GM10248 (cell line): ENCODE measurements at regions of chr10 and their contacts with region 1.

Region 1: DNA sequence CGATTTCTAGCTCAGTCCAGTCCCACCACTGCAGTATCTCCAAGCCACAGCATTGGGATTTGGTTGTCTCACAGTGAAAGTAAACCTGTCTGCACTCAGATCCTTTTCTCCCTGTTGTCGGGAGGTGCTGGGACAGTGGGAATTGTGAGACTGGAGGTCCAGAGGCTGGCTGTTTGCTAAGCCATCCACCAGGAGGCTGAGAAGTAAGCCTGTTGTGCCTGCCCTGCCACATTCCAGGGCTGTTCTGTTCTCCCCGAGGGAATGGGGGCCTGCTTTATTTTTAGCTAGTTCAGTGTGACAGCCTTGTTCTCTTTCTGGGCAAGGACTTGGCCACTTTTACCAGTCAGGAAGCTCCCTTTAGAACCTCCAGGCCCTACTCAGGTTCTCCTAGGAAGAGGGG is 54.9 kb downstream of the HK1 start:
- DNase-seq: no peak
- CTCF ChIP-seq: no peak

Region 2: GRCh38 chr10:69285699-69286098 is 47.5 kb before region 1 on chr10:
- CTCF ChIA-PET with region 1: no interaction called
- POLR2A ChIA-PET with region 1: no interaction called
- DNase-seq: no peak
- CTCF ChIP-seq: no peak

Region 3: GRCh38 chr10:69344591-69345252 is 11.5 kb after region 1 on chr10:
- CTCF ChIA-PET with region 1: interaction called, 14 read pairs
- POLR2A ChIA-PET with region 1: no interaction called
- DNase-seq: peak; percentile 48
- CTCF ChIP-seq: no peak

Region 4: GRCh38 chr10:69383558-69383957 is 50.4 kb after region 1 on chr10:
- CTCF ChIA-PET with region 1: no interaction called
- POLR2A ChIA-PET with region 1: no interaction called
- DNase-seq: no peak
- CTCF ChIP-seq: no peak

Region 5: DNA sequence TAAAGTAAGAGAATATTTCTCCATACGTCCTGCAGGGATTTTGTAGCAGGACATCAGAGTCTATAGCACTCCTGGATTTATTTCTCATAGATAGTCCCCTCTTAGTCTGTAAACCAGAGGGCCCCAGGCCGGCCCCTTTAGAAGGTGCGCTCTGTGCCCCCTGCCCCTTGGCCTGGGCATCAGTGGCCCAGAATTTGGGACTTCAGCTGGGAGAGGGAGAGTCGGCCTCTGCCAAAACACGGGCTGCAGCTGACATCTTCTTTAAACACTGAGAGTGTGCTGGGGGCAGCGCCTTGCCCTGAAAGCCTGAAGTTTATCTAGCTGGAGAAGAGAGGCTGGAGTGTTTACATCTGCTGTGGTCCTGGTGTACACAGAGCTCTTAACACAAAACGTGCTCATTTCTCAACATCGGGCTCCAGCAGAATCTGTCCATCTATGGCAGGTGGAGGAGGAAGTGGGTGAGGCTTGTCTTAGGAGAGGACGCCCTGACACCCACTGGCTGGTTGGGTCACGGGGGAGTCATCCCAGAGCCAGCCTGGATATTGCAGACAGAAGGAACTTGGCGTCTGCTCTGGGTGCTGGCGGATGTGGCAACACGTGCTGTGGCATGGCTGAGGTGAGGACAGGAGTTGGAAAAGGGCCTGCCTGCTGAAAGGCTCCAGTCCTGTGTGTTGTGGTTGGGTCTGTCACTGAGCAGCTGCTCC is 88.6 kb after region 1 on chr10:
- CTCF ChIA-PET with region 1: no interaction called
- POLR2A ChIA-PET with region 1: no interaction called
- DNase-seq: no peak
- CTCF ChIP-seq: no peak